ENCODE measurements at regions of chr10 and their contacts with region 1.

Region 1: DNA sequence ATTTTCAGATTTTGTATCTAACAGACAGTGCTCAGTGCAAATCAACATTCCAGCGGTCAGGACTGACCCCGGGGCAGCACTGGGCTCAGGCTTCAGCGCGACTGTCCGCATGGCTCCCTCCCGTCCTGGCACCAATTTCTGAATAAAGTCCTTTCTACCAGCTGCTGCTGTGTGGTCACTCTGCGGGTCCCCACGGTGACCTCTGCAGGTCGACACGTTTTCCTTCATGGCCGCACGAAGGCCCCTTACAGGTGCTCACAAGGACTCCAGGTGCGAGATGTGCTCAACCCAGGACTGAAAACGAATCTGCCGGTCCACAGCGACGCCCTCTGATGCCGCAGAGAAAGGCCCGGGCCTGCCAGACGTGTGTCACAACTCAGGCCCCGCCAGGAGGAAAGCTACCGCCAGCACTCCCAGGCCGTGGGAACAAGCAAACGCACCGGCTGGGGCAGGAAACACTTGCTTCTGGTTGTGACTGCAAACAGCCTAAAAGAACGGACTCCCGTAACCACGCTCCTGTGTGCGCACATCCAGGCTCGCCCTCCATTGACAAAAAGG is 3.7 kb upstream of the UTF1 start:
- DNase-seq: peak in 2 of 14 experiments; percentile 32 to 33
- ATAC-seq: peak; percentile 55
- H3K4me3 ChIP-seq: no peak overlapping the region
- H3K4me3 Mint-ChIP-seq: no peak overlapping the region
- H3K27ac ChIP-seq: no peak overlapping the region
- H3K27ac Mint-ChIP-seq: no peak overlapping the region
- H3K4me1 ChIP-seq: peaks cover 17% of the 10 kb centered on the region
- H3K4me1 Mint-ChIP-seq: peaks cover 17% of the 10 kb centered on the region
- H3K27me3 ChIP-seq: peaks cover 26 to 30% of the 10 kb centered on the region in 2 experiments
- H3K27me3 Mint-ChIP-seq: peaks cover 51% of the 10 kb centered on the region
- CTCF ChIP-seq: no peak

Region 2: GRCh38 chr10:132808383-132809231 is 417.7 kb before region 1 on chr10:
- CTCF ChIA-PET with region 1: no interaction called
- POLR2A ChIA-PET with region 1: no interaction called
- intact Hi-C with region 1: no loop called
- DNase-seq: no peak
- ATAC-seq: no peak
- H3K4me3 ChIP-seq: no peak overlapping the region
- H3K4me3 Mint-ChIP-seq: no peak overlapping the region
- H3K27ac ChIP-seq: no peak overlapping the region
- H3K27ac Mint-ChIP-seq: no peak overlapping the region
- H3K4me1 ChIP-seq: no peaks in the 10 kb centered on the region
- H3K4me1 Mint-ChIP-seq: no peaks in the 10 kb centered on the region
- H3K27me3 ChIP-seq: no peaks in the 10 kb centered on the region
- H3K27me3 Mint-ChIP-seq: no peaks in the 10 kb centered on the region
- CTCF ChIP-seq: no peak

Region 3: GRCh38 chr10:133144771-133145170 is 81.6 kb before region 1 on chr10:
- CTCF ChIA-PET with region 1: no interaction called
- POLR2A ChIA-PET with region 1: no interaction called
- intact Hi-C with region 1: loop called in 1 of 2 experiments (anchors 5 kb)
- DNase-seq: peak in 1 of 14 experiments; percentile 2
- ATAC-seq: no peak
- H3K4me3 ChIP-seq: no peak overlapping the region
- H3K4me3 Mint-ChIP-seq: no peak overlapping the region
- H3K27ac ChIP-seq: no peak overlapping the region
- H3K27ac Mint-ChIP-seq: no peak overlapping the region
- H3K4me1 ChIP-seq: peaks cover 5% of the 10 kb centered on the region
- H3K4me1 Mint-ChIP-seq: peaks cover 6% of the 10 kb centered on the region
- H3K27me3 ChIP-seq: peaks cover 10 to 12% of the 10 kb centered on the region in 2 experiments
- H3K27me3 Mint-ChIP-seq: peaks cover 64% of the 10 kb centered on the region
- CTCF ChIP-seq: no peak

Region 4: DNA sequence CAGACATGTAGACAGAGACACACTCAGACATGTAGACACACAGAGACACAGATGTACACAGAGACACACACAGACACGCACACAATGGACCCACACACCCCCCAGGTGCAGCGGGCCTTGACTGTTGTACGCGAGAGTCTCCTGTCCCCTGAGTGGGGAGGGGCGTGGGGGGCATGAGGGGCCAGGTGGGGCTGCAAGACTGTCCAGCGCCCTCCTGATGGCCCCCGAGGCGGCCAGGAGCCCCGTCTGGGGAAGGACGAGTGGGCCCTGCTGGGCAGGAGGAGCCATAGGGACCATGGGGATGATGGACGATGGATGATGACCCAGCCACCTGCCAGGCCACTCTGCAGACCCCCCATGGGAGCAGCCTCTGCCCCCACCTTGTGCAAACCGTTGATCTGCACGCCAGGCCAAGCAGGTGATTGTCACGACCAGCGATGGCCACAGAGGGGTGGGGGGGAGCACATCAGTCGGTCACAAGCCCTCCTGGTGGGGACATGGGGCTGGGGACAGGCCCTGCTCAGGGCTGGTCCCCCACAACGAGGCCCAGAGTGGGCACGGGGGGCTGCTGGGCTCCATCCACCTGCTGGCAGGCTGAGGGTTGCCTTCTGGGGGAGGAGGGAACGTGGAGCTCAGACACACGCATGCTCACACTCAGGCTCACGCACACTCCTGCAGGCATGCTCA is 22.9 kb after region 1 on chr10:
- CTCF ChIA-PET with region 1: no interaction called
- POLR2A ChIA-PET with region 1: no interaction called
- intact Hi-C with region 1: no loop called
- DNase-seq: peak in 1 of 14 experiments; percentile 26
- ATAC-seq: no peak
- H3K4me3 ChIP-seq: no peak overlapping the region
- H3K4me3 Mint-ChIP-seq: no peak overlapping the region
- H3K27ac ChIP-seq: no peak overlapping the region
- H3K27ac Mint-ChIP-seq: no peak overlapping the region
- H3K4me1 ChIP-seq: peaks cover 4% of the 10 kb centered on the region
- H3K4me1 Mint-ChIP-seq: no peaks in the 10 kb centered on the region
- H3K27me3 ChIP-seq: peaks cover 0 to 3% of the 10 kb centered on the region in 2 experiments
- H3K27me3 Mint-ChIP-seq: no peaks in the 10 kb centered on the region
- CTCF ChIP-seq: no peak